GM12878 (cell line): ENCODE measurements at regions of chr18 and their contacts with region 1.

Region 1: GRCh38 chr18:79405781-79406575 is 10.2 kb downstream of the NFATC1 start:
- DNase-seq: peak; percentile 45
- ATAC-seq: peak; percentile 83
- H3K4me3 ChIP-seq: peak overlapping the region; percentile 52; the same call in 1 of the 2 replicates
- H3K27ac ChIP-seq: peak overlapping the region; percentile 56
- H3K4me1 ChIP-seq: peaks cover 31% of the 10 kb centered on the region
- H3K27me3 ChIP-seq: no peaks in the 10 kb centered on the region
- CTCF ChIP-seq: 0 out of 6 replicates have a peak, but pooled peaks of 1 of the 3 experiments have one; percentile 6
- EP300 ChIP-seq: peak in 1 of 2 experiments; percentile 27; a peak in 2 of 4 replicates
- POLR2A ChIP-seq: peak; percentile 74
- RAD21 ChIP-seq: no peak

Region 2: DNA sequence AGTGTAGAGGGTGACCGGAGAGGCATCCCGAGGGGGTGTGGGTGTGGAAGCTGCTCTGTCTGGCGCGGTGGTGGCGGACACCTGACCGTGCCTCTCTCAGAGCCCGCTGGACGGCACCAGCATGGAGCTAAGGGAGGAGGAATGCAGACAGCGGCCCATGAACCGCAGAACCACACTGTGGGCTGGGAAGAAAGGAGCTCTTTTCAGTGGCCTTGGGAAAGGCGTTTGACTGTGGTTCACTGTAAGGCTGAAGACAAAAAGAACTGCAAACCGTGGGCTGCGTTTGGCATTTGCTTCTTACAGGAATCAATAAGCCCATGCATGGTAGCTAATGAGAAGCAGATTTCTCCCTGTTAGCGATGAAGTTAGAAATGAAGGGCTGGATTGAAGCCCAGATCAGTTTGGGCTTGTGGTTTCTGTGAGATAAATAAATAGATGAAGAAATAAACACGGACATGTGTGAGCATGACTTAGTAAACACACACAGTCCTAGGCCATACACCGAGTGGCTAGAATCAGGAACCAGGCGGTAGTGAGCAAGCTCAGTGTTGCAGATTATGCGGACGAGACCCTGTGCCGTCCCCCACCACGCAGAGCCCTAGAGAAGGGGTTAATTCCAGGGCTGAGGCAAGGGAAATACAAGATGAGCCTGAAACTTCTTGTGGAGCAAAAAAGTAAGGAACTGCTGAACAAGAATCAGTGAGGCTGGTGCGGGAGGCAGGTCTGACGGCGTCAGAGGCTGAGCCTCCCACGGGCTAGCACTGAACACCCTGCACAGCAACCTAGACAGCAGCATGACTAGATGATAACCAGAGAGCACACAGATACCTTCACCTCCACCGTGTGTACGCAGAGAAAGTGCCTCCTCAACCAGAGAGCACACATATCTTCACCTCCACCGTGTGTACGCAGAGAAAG is 39.5 kb before region 1 on chr18:
- CTCF ChIA-PET with region 1: no interaction called
- POLR2A ChIA-PET with region 1: no interaction called
- RAD21 ChIA-PET with region 1: no interaction called
- SMC1A ChIA-PET with region 1: no interaction called
- in situ Hi-C with region 1: no loop called
- intact Hi-C with region 1: no loop called
- DNase-seq: no peak
- ATAC-seq: no peak
- H3K4me3 ChIP-seq: no peak overlapping the region
- H3K27ac ChIP-seq: no peak overlapping the region
- H3K4me1 ChIP-seq: no peaks in the 10 kb centered on the region
- H3K27me3 ChIP-seq: no peaks in the 10 kb centered on the region
- CTCF ChIP-seq: no peak
- EP300 ChIP-seq: no peak
- POLR2A ChIP-seq: no peak
- RAD21 ChIP-seq: no peak

Region 3: GRCh38 chr18:79393635-79394533 is 12.1 kb before region 1 on chr18:
- CTCF ChIA-PET with region 1: interaction called, 7 read pairs
- POLR2A ChIA-PET with region 1: interaction called, 5 read pairs
- RAD21 ChIA-PET with region 1: interaction called, 10 read pairs
- SMC1A ChIA-PET with region 1: interaction called, 15 read pairs
- in situ Hi-C with region 1: no loop called
- intact Hi-C with region 1: no loop called
- DNase-seq: no peak
- ATAC-seq: peak; percentile 35
- H3K4me3 ChIP-seq: peak overlapping the region; percentile 68
- H3K27ac ChIP-seq: no peak overlapping the region
- H3K4me1 ChIP-seq: peaks cover 12% of the 10 kb centered on the region
- H3K27me3 ChIP-seq: peaks cover 2 to 21% of the 10 kb centered on the region in 2 experiments; a peak in 3 of 4 replicates
- CTCF ChIP-seq: no peak
- EP300 ChIP-seq: no peak
- POLR2A ChIP-seq: no peak
- RAD21 ChIP-seq: no peak

Region 4: DNA sequence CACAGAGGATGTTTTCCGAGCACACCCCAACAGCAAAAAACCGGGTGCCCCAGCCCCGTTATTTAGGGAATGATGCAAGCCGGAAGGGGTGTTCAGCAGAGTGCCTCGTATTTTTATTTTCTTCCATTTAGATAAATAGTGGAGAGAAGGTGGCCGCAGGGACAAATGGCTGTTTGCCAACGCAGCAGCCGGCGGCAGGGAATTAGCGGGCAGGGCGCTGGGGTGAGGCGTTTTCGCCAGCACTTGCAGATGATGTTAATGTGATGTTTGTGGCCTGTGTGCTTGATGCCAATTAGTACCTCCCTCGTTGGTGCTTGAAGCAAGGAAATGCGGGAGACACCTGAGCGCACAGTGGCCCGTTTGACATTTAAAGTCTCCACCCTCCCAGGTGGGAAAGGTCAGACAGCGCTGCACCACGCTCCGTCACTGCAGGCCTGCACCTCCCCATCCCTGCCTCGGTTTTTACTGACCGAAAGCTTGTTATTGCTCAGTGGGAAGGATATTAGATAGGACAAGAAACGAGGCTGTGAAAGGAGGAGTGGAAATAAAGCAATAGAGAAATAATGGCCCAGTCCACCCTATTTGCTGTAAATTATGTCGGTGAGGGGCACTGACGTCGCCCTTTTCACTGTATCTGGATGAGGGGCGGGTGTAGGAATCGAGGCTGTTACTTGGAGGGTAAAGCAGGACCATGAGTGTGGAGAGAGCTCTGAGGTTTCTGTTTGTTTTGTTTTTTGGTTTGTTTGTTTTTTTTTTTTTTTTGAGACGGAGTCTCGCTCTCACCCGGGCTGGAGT is 28.8 kb after region 1 on chr18:
- CTCF ChIA-PET with region 1: interaction called, 10 read pairs
- POLR2A ChIA-PET with region 1: interaction called, 15 read pairs
- RAD21 ChIA-PET with region 1: interaction called, 14 read pairs
- SMC1A ChIA-PET with region 1: interaction called, 15 read pairs
- in situ Hi-C with region 1: no loop called
- intact Hi-C with region 1: loop called (anchors 2 kb)
- DNase-seq: no peak
- ATAC-seq: no peak
- H3K4me3 ChIP-seq: no peak overlapping the region
- H3K27ac ChIP-seq: no peak overlapping the region
- H3K4me1 ChIP-seq: peaks cover 15% of the 10 kb centered on the region
- H3K27me3 ChIP-seq: no peaks in the 10 kb centered on the region
- CTCF ChIP-seq: no peak
- EP300 ChIP-seq: no peak
- POLR2A ChIP-seq: no peak
- RAD21 ChIP-seq: no peak

Region 5: GRCh38 chr18:79625195-79625923 is 219.4 kb after region 1 on chr18:
- CTCF ChIA-PET with region 1: no interaction called
- POLR2A ChIA-PET with region 1: no interaction called
- RAD21 ChIA-PET with region 1: no interaction called
- SMC1A ChIA-PET with region 1: interaction called, 14 read pairs
- in situ Hi-C with region 1: no loop called
- intact Hi-C with region 1: no loop called
- DNase-seq: peak; percentile 79
- ATAC-seq: peak; percentile 89
- H3K4me3 ChIP-seq: peak overlapping the region; percentile 23; the same call in 1 of the 2 replicates
- H3K27ac ChIP-seq: peak overlapping the region; percentile 89
- H3K4me1 ChIP-seq: peaks cover 32% of the 10 kb centered on the region
- H3K27me3 ChIP-seq: no peaks in the 10 kb centered on the region
- CTCF ChIP-seq: no peak
- EP300 ChIP-seq: peak in 1 of 2 experiments; percentile 39; a peak in 1 of 4 replicates
- POLR2A ChIP-seq: 0 out of 2 replicates have a peak, but pooled peaks have one; percentile 33
- RAD21 ChIP-seq: no peak